ENCODE measurements at regions of chrX and their contacts with region 1.

Region 1: DNA sequence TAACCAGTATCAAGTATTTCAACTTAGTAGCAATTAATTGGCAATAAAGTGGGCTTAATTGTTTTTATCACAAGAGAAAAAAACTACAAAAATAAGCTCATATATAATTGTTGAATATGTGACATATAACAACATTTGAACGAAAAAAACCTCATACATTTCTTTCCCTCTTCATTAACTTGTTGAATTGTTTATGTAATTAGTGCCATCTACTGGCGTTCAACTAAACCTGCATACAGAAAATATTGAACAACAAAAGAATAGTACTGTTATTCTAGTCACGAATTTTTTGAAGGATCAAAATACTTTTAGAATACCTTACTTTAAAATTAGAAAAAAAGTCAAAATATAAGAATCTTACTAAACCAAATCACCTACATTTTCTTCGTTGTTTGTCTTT is 586.5 kb upstream of the FTHL17 start:
- DNase-seq: peak in 1 of 2 donors; percentile 35
- H3K4me3 ChIP-seq: no peak overlapping the region
- H3K27ac ChIP-seq: no peak overlapping the region
- H3K4me1 ChIP-seq: no peaks in the 10 kb centered on the region
- H3K27me3 ChIP-seq: no peaks in the 10 kb centered on the region
- CTCF ChIP-seq: peak in 4 of 7 experiments; percentile 23 to 42 (median 27)
- EP300 ChIP-seq: no peak
- POLR2A ChIP-seq: no peak

Region 2: DNA sequence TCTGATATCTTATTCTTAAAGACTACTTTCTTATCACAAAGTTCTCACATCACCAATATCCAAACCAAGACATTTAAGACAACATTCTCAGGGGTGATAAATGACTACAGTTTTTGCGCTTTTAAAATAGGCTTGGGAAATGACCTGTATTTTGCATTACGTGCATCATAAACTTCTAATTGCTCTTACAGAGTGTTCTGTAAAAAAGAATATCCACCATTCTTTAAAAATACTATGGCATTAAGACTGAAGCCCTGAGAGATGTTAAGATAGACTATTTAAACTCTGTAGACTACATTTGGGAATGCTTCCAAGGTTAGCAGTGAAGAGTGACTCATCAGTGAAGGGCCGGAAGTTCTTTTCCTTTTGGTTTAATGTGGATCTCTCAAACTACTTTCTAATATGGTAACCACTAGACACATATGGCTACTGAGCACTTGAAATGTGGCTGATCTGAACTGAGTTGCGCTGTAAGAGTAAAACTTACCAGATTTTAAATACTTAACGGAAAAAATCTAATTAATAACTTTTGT is 67.7 kb before region 1 on chrX:
- intact Hi-C with region 1: loop called (anchors 10 kb)
- DNase-seq: peak in 1 of 2 donors; percentile 5
- H3K4me3 ChIP-seq: no peak overlapping the region
- H3K27ac ChIP-seq: no peak overlapping the region
- H3K4me1 ChIP-seq: no peaks in the 10 kb centered on the region
- H3K27me3 ChIP-seq: no peaks in the 10 kb centered on the region
- CTCF ChIP-seq: no peak
- EP300 ChIP-seq: no peak
- POLR2A ChIP-seq: no peak

Region 3: DNA sequence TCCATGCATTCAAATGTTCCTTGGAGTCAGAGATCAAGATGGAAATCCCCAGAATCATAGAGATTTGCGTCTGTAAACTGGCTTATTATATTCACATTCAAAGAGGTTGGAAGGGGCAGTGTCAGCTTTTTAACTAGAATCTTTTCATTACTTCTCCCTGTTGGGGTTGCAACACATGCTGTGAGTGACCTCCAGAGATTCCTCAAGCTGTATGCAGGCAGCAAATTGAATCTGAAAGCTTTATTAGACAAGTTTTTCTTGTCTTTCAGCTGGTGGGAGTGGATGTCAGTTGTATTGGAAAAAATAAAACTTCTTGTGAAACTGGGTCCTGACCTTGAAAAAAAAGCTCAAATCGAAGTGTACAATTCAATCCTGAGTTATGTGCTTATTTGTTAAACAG is 150.0 kb after region 1 on chrX:
- intact Hi-C with region 1: no loop called
- DNase-seq: peak in 1 of 2 donors; percentile 6
- H3K4me3 ChIP-seq: no peak overlapping the region
- H3K27ac ChIP-seq: no peak overlapping the region
- H3K4me1 ChIP-seq: no peaks in the 10 kb centered on the region
- H3K27me3 ChIP-seq: no peaks in the 10 kb centered on the region
- CTCF ChIP-seq: no peak
- EP300 ChIP-seq: no peak
- POLR2A ChIP-seq: no peak